Activated CD4-positive, alpha-beta memory T cell treated with anti-CD3 and anti-CD28 coated beads, Interleukin-2, amount 10 ng/mL, durations not matched to agents 7 days and 5 days (primary cell): ENCODE measurements at regions of chr16 and their contacts with region 1.

Region 1: GRCh38 chr16:17343028-17343427 is 127.7 kb downstream of the XYLT1 start:
- DNase-seq: peak; percentile 74
- H3K4me3 Mint-ChIP-seq: peak overlapping the region; percentile 34
- H3K27ac Mint-ChIP-seq: peak overlapping the region; percentile 90
- H3K4me1 Mint-ChIP-seq: peaks cover 79% of the 10 kb centered on the region
- H3K27me3 Mint-ChIP-seq: no peaks in the 10 kb centered on the region

Region 2: DNA sequence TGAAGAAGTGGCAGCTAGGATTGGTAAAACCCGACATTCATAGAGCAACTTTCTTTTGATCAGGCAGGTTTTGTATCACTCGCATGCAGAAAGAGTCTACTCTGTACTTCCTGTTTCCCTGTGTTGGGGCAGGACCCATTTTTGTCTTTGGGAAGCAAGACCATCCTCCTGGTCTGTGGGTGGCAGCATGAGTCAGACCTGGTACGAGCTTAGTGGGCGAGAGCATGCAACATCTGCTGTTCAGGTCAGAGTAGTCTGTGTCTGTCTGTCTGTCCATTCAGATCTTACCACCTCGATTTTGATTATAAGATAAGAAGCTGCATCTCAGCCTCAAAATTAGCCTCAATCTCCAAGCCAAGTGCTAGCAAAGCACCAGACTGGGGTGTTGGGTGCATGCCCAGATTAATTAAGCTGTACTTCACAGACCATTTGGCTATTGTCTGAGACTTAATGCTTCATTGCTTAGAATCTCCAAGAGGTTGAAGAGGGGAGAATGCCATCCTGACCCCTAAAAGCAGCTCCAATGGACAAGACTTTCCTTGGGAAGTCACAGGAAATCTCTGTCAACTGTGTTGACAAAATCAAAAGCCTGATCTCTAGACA is 16.9 kb after region 1 on chr16:
- CTCF ChIA-PET with region 1: interaction called, 10 read pairs
- POLR2A ChIA-PET with region 1: interaction called, 353 read pairs
- DNase-seq: peak; percentile 61
- H3K4me3 Mint-ChIP-seq: no peak overlapping the region
- H3K27ac Mint-ChIP-seq: peak overlapping the region; percentile 79
- H3K4me1 Mint-ChIP-seq: peaks cover 72% of the 10 kb centered on the region
- H3K27me3 Mint-ChIP-seq: no peaks in the 10 kb centered on the region

Region 3: DNA sequence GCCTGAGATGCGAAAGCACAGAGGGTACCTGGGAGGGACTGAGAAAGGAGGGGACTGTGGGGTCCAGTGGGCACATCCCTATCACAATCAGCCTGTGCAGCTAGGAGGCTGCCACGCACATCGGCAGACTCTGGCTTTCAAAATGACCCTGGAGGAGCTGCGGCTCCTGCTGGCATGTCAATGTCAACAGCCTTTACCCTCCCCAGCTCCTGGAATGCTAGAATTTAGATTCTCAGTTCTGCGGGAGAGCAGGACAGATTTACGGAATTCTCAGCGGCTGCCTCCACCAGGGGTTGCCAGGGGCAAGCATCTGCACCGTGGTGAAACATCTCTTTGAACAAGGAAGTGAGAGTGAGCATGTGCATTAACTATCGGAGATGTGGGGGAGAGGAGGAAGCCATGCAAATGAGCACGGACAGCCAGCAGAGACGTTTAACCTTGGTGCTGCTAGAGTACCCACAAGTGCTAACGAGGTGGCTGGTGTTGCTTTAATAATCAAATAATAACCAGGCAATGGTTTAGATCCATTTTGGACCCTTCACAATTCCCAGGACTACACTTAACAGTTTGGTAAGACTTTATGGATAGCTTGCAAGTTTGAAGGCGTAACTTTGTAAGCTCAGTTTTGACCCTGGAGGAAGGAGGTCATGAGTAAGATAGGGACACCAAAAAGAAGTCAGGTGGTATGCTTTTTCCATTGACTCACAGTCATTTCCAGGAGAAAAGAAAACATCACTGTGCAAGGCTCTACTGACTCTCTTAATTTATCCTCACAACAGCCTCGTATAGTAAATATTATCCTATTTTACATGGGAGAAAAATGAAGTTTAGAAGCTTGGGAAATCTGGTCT is 73.7 kb after region 1 on chr16:
- CTCF ChIA-PET with region 1: interaction called, 16 read pairs
- POLR2A ChIA-PET with region 1: interaction called, 12 read pairs
- DNase-seq: peak; percentile 58
- H3K4me3 Mint-ChIP-seq: peak overlapping the region; percentile 40
- H3K27ac Mint-ChIP-seq: peak overlapping the region; percentile 86
- H3K4me1 Mint-ChIP-seq: peaks cover 48% of the 10 kb centered on the region
- H3K27me3 Mint-ChIP-seq: no peaks in the 10 kb centered on the region

Region 4: GRCh38 chr16:17448640-17449638 is 105.9 kb after region 1 on chr16:
- CTCF ChIA-PET with region 1: interaction called, 5 read pairs
- POLR2A ChIA-PET with region 1: interaction called, 15 read pairs
- DNase-seq: peak; percentile 71
- H3K4me3 Mint-ChIP-seq: peak overlapping the region; percentile 45
- H3K27ac Mint-ChIP-seq: peak overlapping the region; percentile 98
- H3K4me1 Mint-ChIP-seq: peaks cover 62% of the 10 kb centered on the region
- H3K27me3 Mint-ChIP-seq: no peaks in the 10 kb centered on the region

Region 5: GRCh38 chr16:17467923-17468540 is 125.0 kb after region 1 on chr16:
- CTCF ChIA-PET with region 1: interaction called, 4 read pairs
- POLR2A ChIA-PET with region 1: interaction called, 21 read pairs
- DNase-seq: peak; percentile 52
- H3K4me3 Mint-ChIP-seq: peak overlapping the region; percentile 77
- H3K27ac Mint-ChIP-seq: no peak overlapping the region
- H3K4me1 Mint-ChIP-seq: peaks cover 55% of the 10 kb centered on the region
- H3K27me3 Mint-ChIP-seq: no peaks in the 10 kb centered on the region